OCI-LY7 (cell line): ENCODE measurements at regions of chr4 and their contacts with region 1.

Region 1: GRCh38 chr4:153497988-153498967 is 32.1 kb downstream of the TMEM131L start:
- DNase-seq: peak; percentile 61
- H3K4me3 ChIP-seq: peak overlapping the region; percentile 27
- H3K27ac ChIP-seq: peak overlapping the region; percentile 45
- H3K4me1 ChIP-seq: peaks cover 62% of the 10 kb centered on the region
- CTCF ChIP-seq: no peak

Region 2: DNA sequence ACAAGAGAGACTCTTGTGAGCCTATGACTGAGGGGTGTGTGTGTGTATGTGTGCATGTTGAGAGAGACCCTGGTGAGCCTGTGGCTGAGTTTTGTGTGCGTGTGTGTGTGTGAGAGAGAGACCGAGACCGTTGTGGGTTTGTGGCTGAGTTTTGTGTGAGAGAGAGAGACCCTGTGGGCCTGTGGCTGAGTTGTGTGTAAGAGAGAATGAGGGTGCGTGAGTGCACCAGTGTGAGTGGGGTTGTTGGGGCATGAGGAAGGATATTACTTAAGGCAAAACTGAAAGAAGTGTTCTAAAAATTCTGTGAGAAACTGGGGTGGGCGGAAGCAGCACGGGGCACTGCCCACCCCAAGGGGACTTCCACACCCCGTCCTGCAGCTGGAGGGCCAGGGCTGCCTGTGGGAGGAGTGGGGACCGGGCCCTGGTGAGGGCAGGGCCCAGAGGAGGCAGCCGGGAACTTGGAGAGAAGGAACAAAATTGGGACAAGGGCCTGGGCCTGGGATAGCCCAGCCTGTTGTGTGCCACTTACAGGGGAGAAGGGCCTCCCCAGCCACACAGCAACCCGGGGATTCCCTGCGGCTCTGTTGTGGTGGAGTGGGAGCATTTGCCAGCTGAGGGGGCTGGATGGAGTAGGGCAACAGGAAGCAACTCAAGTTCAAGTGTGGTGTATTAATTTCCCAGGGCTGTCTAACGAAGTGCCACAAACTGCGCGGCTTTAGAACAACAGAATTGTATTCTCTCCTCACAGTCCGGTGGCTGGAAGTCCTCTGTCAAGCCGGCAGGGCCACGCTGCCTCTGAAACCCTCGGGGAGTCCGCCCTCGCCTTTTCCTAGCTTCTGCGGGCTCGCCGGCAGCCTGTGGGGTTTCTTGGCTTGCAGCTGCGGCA is 10.0 kb before region 1 on chr4:
- CTCF ChIA-PET with region 1: interaction called, 9 read pairs
- POLR2A ChIA-PET with region 1: interaction called, 15 read pairs
- intact Hi-C with region 1: no loop called
- DNase-seq: no peak
- H3K4me3 ChIP-seq: peak overlapping the region; percentile 32
- H3K27ac ChIP-seq: peak overlapping the region; percentile 49
- H3K4me1 ChIP-seq: peaks cover 90% of the 10 kb centered on the region
- CTCF ChIP-seq: no peak